CD4-positive, alpha-beta T cell (primary cell): ENCODE measurements at regions of chr11 and their contacts with region 1.

Region 1: DNA sequence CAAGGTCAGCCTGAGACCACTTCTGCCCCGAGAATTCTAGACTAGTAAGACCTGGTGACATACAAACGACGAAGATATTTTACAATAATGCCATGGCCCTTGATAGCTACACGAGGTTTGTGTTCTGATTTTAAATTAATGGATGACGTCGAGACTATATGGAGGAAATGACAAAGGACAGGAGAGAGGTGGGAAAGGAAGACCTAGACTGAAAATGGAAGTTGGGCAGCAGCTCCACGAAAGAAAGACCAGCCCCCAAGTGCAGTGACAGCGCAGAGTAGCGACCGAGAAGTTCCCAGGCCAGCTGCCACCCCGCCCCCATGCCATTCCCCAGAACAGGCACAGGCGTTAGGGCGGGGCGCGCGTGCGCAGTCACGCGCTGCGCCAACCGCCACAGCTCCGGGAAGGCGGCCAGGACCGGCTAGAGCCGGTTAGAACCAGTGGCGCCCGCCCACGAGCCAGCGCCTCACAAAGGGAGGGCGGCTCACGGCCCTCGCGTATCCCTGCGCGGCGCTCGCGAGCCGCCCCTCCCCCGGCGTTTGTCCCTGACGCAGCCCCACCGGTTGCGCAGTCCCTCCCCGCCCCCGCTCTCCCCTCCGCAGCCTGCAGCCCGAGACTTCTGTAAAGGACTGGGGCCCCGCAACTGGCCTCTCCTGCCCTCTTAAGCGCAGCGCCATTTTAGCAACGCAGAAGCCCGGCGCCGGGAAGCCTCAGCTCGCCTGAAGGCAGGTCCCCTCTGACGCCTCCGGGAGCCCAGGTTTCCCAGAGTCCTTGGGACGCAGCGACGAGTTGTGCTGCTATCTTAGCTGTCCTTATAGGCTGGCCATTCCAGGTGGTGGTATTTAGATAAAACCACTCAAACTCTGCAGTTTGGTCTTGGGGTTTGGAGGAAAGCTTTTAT is 1.5 kb upstream of the MALAT1 start:
- DNase-seq: peak; percentile 95 to 99 (median 98)
- ATAC-seq: peak; percentile 78
- H3K4me3 ChIP-seq: peak overlapping the region; percentile 73
- H3K4me3 Mint-ChIP-seq: no peak overlapping the region
- H3K27ac ChIP-seq: peak overlapping the region; percentile 96 to 99
- H3K27ac Mint-ChIP-seq: no peak overlapping the region
- H3K4me1 ChIP-seq: peaks cover 33% of the 10 kb centered on the region
- H3K4me1 Mint-ChIP-seq: peaks cover 28% of the 10 kb centered on the region
- H3K27me3 ChIP-seq: no peaks in the 10 kb centered on the region
- H3K27me3 Mint-ChIP-seq: no peaks in the 10 kb centered on the region
- CTCF ChIP-seq: no peak

Region 2: GRCh38 chr11:65117216-65118096 is 379.9 kb before region 1 on chr11 and contains the start of gene ZNHIT2:
- CTCF ChIA-PET with region 1: no interaction called
- POLR2A ChIA-PET with region 1: interaction called, 25 read pairs
- intact Hi-C with region 1: no loop called
- DNase-seq: peak; percentile 99 to 100 (median 100)
- ATAC-seq: peak; percentile 63
- H3K4me3 ChIP-seq: peak within 1 kb of the TSS; percentile 82
- H3K4me3 Mint-ChIP-seq: peak within 1 kb of the TSS; percentile 96
- H3K27ac ChIP-seq: peak within 1 kb of the TSS; percentile 79 to 85
- H3K27ac Mint-ChIP-seq: peak within 1 kb of the TSS; percentile 91
- H3K4me1 ChIP-seq: peaks cover 66% of the 10 kb centered on the region
- H3K4me1 Mint-ChIP-seq: peaks cover 52% of the 10 kb centered on the region
- H3K27me3 ChIP-seq: no peaks in the 10 kb centered on the region
- H3K27me3 Mint-ChIP-seq: no peaks in the 10 kb centered on the region
- CTCF ChIP-seq: peak; percentile 88
- total RNA-seq, gene ZNHIT2: 9.0 to 9.5 TPM

Region 3: DNA sequence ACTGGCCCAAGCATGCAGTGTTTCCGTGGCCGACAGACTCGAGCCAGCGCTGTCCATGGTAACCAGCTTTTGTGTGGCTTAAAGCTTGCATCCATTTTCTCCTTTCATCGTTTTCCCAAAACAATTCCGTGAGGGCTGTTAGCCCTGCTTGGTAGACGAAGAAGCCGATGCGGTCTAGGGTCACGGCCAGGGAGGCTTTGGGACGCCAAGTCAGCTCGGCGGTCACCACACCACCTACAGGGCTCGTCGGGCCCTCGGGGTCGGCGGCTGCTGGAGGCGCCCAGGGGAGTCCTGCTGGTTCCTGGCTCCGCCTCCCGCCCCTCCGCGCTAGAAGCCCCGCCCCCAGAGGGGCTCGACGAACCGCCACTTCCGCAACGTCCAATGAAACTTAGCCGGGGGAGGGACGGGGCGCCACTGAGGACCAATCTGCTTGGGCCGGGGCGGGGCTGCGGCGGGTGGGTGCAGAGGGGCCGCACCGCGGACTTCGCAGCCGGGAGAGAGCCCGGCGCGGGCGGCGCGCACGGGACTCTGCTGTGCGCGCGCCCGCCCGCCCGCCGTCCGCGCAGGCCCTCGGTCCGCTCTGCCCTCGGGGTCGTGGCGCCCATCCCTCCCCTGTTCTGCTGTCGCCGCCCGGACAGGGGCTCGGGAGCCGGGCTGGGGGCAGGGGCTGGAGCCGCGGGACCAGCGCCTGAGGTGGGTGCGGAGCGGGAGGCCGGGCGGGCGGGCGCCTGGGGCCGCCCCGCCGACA is 143.0 kb before region 1 on chr11 and contains the start of gene TIGD3:
- CTCF ChIA-PET with region 1: no interaction called
- POLR2A ChIA-PET with region 1: interaction called, 19 read pairs
- intact Hi-C with region 1: no loop called
- DNase-seq: peak; percentile 91 to 99 (median 96)
- ATAC-seq: peak; percentile 96
- H3K4me3 ChIP-seq: peak within 1 kb of the TSS; percentile 61
- H3K4me3 Mint-ChIP-seq: peak within 1 kb of the TSS; percentile 97
- H3K27ac ChIP-seq: peak within 1 kb of the TSS in 1 of 2 donors; percentile 26
- H3K27ac Mint-ChIP-seq: peak within 1 kb of the TSS; percentile 79
- H3K4me1 ChIP-seq: peaks cover 20% of the 10 kb centered on the region
- H3K4me1 Mint-ChIP-seq: peaks cover 18% of the 10 kb centered on the region
- H3K27me3 ChIP-seq: no peaks in the 10 kb centered on the region
- H3K27me3 Mint-ChIP-seq: no peaks in the 10 kb centered on the region
- CTCF ChIP-seq: no peak
- total RNA-seq, gene TIGD3: 0.73 to 0.85 TPM

Region 4: GRCh38 chr11:65440831-65441499 is 56.4 kb before region 1 on chr11:
- CTCF ChIA-PET with region 1: no interaction called
- POLR2A ChIA-PET with region 1: interaction called, 25 read pairs
- intact Hi-C with region 1: no loop called
- DNase-seq: peak in 3 of 14 experiments; percentile 14 to 33 (median 29)
- ATAC-seq: peak; percentile 14
- H3K4me3 ChIP-seq: no peak overlapping the region
- H3K4me3 Mint-ChIP-seq: no peak overlapping the region
- H3K27ac ChIP-seq: no peak overlapping the region
- H3K27ac Mint-ChIP-seq: peak overlapping the region; percentile 74
- H3K4me1 ChIP-seq: peaks cover 55% of the 10 kb centered on the region
- H3K4me1 Mint-ChIP-seq: peaks cover 59% of the 10 kb centered on the region
- H3K27me3 ChIP-seq: no peaks in the 10 kb centered on the region
- H3K27me3 Mint-ChIP-seq: no peaks in the 10 kb centered on the region
- CTCF ChIP-seq: no peak

Region 5: DNA sequence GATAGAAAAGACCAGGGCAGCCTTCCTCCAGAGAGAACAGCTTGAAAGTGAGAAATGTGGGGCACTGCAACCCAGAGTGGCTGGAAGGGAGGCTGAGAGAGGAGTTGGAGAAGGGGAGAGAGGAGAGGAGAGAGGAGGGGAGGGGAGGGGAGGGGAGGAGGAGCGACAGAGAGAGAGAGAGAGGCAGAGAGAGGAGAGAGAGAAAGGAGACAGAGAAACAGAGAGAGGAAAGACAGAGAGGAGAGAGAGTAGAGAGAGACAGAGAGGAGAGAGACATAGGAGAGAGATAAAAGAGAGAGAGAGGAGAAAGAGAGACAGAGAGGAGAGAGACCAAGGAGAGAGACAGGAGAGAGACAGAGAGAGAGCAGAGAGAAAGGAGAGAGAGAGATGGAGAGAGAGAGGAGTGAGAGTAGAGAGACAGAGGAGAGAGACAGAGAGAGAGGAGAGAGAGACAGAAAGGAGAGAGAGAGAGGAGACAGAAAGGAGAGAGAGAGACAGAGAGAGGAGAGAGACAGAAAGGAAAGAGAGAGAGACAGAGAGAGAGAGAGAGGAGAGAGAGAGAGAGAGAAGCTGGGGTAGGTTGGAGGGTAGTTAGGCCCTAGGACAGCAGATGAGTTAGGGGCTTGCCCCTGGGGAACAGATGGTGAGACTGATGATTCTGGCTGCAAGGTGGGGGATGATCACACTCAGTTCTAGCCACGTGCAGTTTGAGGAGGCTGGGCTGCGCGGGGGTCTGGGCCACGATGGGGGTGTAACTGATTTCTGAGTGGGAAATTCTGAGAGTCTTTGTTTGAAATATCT is 18.9 kb after region 1 on chr11:
- CTCF ChIA-PET with region 1: interaction called, 40 read pairs
- POLR2A ChIA-PET with region 1: interaction called, 503 read pairs
- intact Hi-C with region 1: loop called in 1 of 2 experiments (anchors 2 kb)
- DNase-seq: no peak
- ATAC-seq: peak; percentile 24
- H3K4me3 ChIP-seq: no peak overlapping the region
- H3K4me3 Mint-ChIP-seq: no peak overlapping the region
- H3K27ac ChIP-seq: no peak overlapping the region
- H3K27ac Mint-ChIP-seq: peak overlapping the region; percentile 49
- H3K4me1 ChIP-seq: peaks cover 5% of the 10 kb centered on the region
- H3K4me1 Mint-ChIP-seq: peaks cover 11% of the 10 kb centered on the region
- H3K27me3 ChIP-seq: no peaks in the 10 kb centered on the region
- H3K27me3 Mint-ChIP-seq: no peaks in the 10 kb centered on the region
- CTCF ChIP-seq: no peak

Region 6: GRCh38 chr11:65615229-65615941 is 118.0 kb after region 1 on chr11 and contains the start of gene PCNX3:
- CTCF ChIA-PET with region 1: no interaction called
- POLR2A ChIA-PET with region 1: interaction called, 46 read pairs
- intact Hi-C with region 1: no loop called
- DNase-seq: peak; percentile 99 to 100 (median 100)
- ATAC-seq: peak; percentile 87
- H3K4me3 ChIP-seq: peak within 1 kb of the TSS; percentile 93
- H3K4me3 Mint-ChIP-seq: peak within 1 kb of the TSS; percentile 98
- H3K27ac ChIP-seq: peak within 1 kb of the TSS; percentile 94
- H3K27ac Mint-ChIP-seq: peak within 1 kb of the TSS; percentile 93
- H3K4me1 ChIP-seq: peaks cover 67% of the 10 kb centered on the region
- H3K4me1 Mint-ChIP-seq: peaks cover 46% of the 10 kb centered on the region
- H3K27me3 ChIP-seq: no peaks in the 10 kb centered on the region
- H3K27me3 Mint-ChIP-seq: no peaks in the 10 kb centered on the region
- CTCF ChIP-seq: no peak
- total RNA-seq, gene PCNX3: 37.3 to 40.5 TPM

Region 7: DNA sequence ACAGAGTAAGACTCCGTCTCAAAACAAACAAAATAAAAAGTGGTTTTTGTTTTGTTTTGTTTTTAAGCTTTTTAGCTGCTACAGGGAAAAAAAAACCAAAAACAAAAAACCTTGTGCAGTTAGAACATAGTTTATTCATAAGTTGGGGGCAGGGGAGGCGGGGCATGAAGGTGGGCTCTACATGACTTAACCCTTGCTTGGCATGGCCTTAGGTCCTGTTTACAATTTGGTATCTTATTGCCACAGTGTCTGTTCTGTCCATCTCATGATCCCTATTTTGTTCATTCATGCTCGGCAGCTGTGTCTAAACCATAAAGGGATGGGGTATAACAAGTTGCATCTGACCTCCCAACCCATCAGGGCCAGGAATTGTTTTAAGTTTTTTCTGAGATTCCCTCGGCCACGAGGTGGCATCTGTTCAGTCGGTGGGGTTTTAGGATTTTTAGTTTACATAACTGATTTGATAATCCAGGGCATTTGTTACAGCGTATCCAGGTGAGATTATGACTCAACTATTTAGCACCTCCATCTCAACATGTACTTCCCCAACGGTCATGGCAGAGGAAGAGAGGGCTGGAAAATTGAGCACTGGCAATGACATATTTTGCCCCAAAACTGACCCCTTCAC is 276.5 kb after region 1 on chr11:
- CTCF ChIA-PET with region 1: no interaction called
- POLR2A ChIA-PET with region 1: no interaction called
- intact Hi-C with region 1: no loop called
- DNase-seq: no peak
- ATAC-seq: no peak
- H3K4me3 ChIP-seq: no peak overlapping the region
- H3K4me3 Mint-ChIP-seq: no peak overlapping the region
- H3K27ac ChIP-seq: no peak overlapping the region
- H3K27ac Mint-ChIP-seq: no peak overlapping the region
- H3K4me1 ChIP-seq: peaks cover 19% of the 10 kb centered on the region
- H3K4me1 Mint-ChIP-seq: peaks cover 15% of the 10 kb centered on the region
- H3K27me3 ChIP-seq: no peaks in the 10 kb centered on the region
- H3K27me3 Mint-ChIP-seq: no peaks in the 10 kb centered on the region
- CTCF ChIP-seq: no peak